Heart right ventricle (tissue), 16 donors: ENCODE measurements at regions of chr4 and their contacts with region 1.

Region 1: GRCh38 chr4:91502365-91502764 is 801.4 kb upstream of the GRID2 start:
- DNase-seq: no peak
- ATAC-seq: no peak
- H3K4me3 ChIP-seq: no peak overlapping the region
- H3K27ac ChIP-seq: no peak overlapping the region
- H3K4me1 ChIP-seq: no peaks in the 10 kb centered on the region
- H3K27me3 ChIP-seq: no peaks in the 10 kb centered on the region
- CTCF ChIP-seq: no peak

Region 2: GRCh38 chr4:90393215-90393614 is 1109.2 kb before region 1 on chr4:
- intact Hi-C with region 1: loop called in 1 of 10 experiments (anchors 5 kb)
- DNase-seq: no peak
- ATAC-seq: no peak
- H3K4me3 ChIP-seq: no peak overlapping the region
- H3K27ac ChIP-seq: no peak overlapping the region
- H3K4me1 ChIP-seq: no peaks in the 10 kb centered on the region
- H3K27me3 ChIP-seq: no peaks in the 10 kb centered on the region
- CTCF ChIP-seq: no peak